CD4-positive, alpha-beta T cell (primary cell): ENCODE measurements at regions of chr2 and their contacts with region 1.

Region 1: DNA sequence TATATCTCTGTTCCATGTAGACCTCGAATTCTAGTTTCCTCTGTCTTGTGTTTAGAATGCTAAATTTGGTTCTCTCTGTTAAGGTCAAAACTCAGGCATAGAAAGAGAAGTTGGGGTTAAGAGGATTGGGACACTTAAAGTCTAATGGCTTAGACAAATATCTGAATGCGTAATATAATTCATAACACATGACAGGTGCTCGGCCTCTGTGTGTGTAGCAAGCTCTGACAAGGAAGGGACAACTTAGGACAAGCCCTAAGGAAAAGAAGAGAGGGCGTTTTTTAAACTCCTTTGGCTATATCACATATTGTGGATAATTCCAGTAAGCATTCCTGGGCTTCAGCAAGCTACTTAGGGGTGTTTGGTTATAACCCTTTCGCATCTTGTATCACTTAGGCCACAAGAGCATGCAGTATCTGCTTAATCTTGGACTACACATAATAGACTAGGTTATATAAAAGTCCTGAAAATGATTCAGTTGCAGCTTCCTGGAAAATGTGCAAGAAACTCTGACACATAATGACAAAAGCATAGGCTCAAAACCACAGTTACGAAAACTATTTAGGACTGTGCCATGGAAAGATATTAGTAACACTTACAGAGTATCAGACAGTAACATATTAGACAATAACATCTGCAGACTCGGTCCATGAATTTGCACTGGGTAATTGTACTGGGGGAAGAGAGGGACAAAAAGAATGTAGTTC is 16.1 kb upstream of the CREB1 start:
- DNase-seq: no peak
- ATAC-seq: no peak
- H3K4me3 ChIP-seq: no peak overlapping the region
- H3K4me3 Mint-ChIP-seq: no peak overlapping the region
- H3K27ac ChIP-seq: no peak overlapping the region
- H3K27ac Mint-ChIP-seq: no peak overlapping the region
- H3K4me1 ChIP-seq: no peaks in the 10 kb centered on the region
- H3K4me1 Mint-ChIP-seq: peaks cover 15% of the 10 kb centered on the region
- H3K27me3 ChIP-seq: no peaks in the 10 kb centered on the region
- H3K27me3 Mint-ChIP-seq: no peaks in the 10 kb centered on the region
- CTCF ChIP-seq: no peak

Region 2: GRCh38 chr2:207546822-207547221 is 33.1 kb after region 1 on chr2:
- CTCF ChIA-PET with region 1: no interaction called
- POLR2A ChIA-PET with region 1: no interaction called
- intact Hi-C with region 1: no loop called
- DNase-seq: no peak
- ATAC-seq: no peak
- H3K4me3 ChIP-seq: no peak overlapping the region
- H3K4me3 Mint-ChIP-seq: no peak overlapping the region
- H3K27ac ChIP-seq: no peak overlapping the region
- H3K27ac Mint-ChIP-seq: peak overlapping the region; percentile 72
- H3K4me1 ChIP-seq: peaks cover 19% of the 10 kb centered on the region
- H3K4me1 Mint-ChIP-seq: peaks cover 81% of the 10 kb centered on the region
- H3K27me3 ChIP-seq: no peaks in the 10 kb centered on the region
- H3K27me3 Mint-ChIP-seq: no peaks in the 10 kb centered on the region
- CTCF ChIP-seq: no peak

Region 3: DNA sequence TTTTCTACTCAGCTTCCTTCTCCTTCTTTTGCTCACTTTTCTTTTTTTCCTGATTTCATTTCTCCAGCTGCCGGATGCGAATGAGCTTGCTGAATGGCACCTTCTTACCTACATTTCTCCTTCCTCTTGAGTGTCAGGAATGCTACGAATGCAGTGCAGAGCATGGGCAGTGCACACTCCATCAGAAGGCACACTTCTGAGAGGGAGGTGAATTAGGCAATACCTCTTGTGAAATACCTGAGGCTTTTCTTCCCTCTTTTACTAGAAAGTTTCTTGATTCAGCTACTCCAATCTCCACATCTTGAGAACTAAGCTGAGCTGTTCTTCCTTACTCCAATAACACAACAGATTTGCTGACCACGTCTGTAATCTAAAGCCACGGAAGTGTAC is 460.5 kb after region 1 on chr2:
- CTCF ChIA-PET with region 1: no interaction called
- POLR2A ChIA-PET with region 1: no interaction called
- intact Hi-C with region 1: loop called in 1 of 2 experiments (anchors 10 kb)
- DNase-seq: peak in 2 of 14 experiments; percentile 4 to 8
- ATAC-seq: no peak
- H3K4me3 ChIP-seq: no peak overlapping the region
- H3K4me3 Mint-ChIP-seq: no peak overlapping the region
- H3K27ac ChIP-seq: no peak overlapping the region
- H3K27ac Mint-ChIP-seq: no peak overlapping the region
- H3K4me1 ChIP-seq: no peaks in the 10 kb centered on the region
- H3K4me1 Mint-ChIP-seq: peaks cover 44% of the 10 kb centered on the region
- H3K27me3 ChIP-seq: no peaks in the 10 kb centered on the region
- H3K27me3 Mint-ChIP-seq: no peaks in the 10 kb centered on the region
- CTCF ChIP-seq: no peak